PC-3 (cell line): ENCODE measurements at regions of chr3 and their contacts with region 1.

Region 1: DNA sequence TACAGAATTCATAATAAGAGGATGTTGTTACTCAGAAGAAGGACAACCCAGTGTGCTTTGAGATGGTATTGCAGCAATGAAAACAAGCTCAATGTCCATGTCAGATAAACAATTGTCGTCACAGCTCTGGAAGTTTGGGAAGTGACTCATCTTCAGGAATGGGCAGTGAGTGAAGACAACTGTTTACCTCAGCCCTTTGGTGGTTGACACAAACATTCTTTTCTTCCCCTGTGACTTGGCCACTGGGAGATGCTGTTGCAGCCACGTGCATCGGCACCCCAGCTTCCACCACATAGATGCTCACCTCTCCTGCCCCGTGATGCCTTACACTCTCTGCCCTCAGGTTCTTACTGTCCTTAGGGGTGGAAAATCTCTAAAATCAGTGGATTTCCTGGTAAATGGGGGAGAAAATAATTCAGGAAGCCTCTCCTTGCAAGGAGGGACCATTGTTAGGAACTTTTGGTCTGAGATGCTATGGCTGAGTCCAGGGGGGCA is 114.1 kb upstream of the GALNT15 start:
- DNase-seq: peak; percentile 99
- ATAC-seq: peak; percentile 88
- H3K4me3 ChIP-seq: no peak overlapping the region
- H3K27ac ChIP-seq: peak overlapping the region; percentile 84
- H3K4me1 ChIP-seq: peaks cover 43% of the 10 kb centered on the region
- H3K27me3 ChIP-seq: no peaks in the 10 kb centered on the region
- CTCF ChIP-seq: peak; percentile 66

Region 2: GRCh38 chr3:15998907-15999306 is 61.5 kb before region 1 on chr3:
- CTCF ChIA-PET with region 1: no interaction called
- POLR2A ChIA-PET with region 1: no interaction called
- intact Hi-C with region 1: no loop called
- DNase-seq: no peak
- ATAC-seq: no peak
- H3K4me3 ChIP-seq: no peak overlapping the region
- H3K27ac ChIP-seq: no peak overlapping the region
- H3K4me1 ChIP-seq: no peaks in the 10 kb centered on the region
- H3K27me3 ChIP-seq: no peaks in the 10 kb centered on the region
- CTCF ChIP-seq: no peak

Region 3: GRCh38 chr3:16090024-16090423 is 29.6 kb after region 1 on chr3:
- CTCF ChIA-PET with region 1: interaction called, 3 read pairs
- POLR2A ChIA-PET with region 1: no interaction called
- intact Hi-C with region 1: loop called (anchors 1 kb)
- DNase-seq: peak; percentile 98
- ATAC-seq: peak; percentile 96
- H3K4me3 ChIP-seq: no peak overlapping the region
- H3K27ac ChIP-seq: peak overlapping the region; percentile 52
- H3K4me1 ChIP-seq: peaks cover 30% of the 10 kb centered on the region
- H3K27me3 ChIP-seq: no peaks in the 10 kb centered on the region
- CTCF ChIP-seq: no peak

Region 4: DNA sequence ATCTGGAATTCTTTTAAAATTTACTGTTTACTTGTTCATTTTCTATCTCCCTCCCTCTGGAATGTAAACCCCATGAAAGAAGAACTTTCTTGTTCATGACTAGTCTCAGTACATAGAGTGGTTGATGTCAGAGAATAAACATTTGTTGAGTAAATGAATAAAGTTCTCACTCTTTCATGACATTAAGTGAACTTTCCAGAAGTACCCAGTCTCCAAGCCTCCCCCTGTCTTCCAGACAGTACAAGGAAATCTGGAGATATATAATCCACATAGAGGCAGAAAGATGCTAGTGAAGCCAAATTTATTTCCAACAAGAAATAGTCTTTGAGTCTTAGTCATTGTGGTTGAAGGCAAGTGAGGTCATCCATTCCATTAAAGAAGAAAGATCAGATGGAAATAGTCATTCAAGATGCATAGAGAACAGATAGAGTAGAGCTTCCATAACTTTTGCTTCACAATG is 42.5 kb after region 1 on chr3:
- CTCF ChIA-PET with region 1: no interaction called
- POLR2A ChIA-PET with region 1: no interaction called
- intact Hi-C with region 1: loop called (anchors 1 kb)
- DNase-seq: peak; percentile 68
- ATAC-seq: peak; percentile 63
- H3K4me3 ChIP-seq: no peak overlapping the region
- H3K27ac ChIP-seq: peak overlapping the region; percentile 97
- H3K4me1 ChIP-seq: peaks cover 22% of the 10 kb centered on the region
- H3K27me3 ChIP-seq: no peaks in the 10 kb centered on the region
- CTCF ChIP-seq: no peak; the same call in 1 of the 2 replicates

Region 5: DNA sequence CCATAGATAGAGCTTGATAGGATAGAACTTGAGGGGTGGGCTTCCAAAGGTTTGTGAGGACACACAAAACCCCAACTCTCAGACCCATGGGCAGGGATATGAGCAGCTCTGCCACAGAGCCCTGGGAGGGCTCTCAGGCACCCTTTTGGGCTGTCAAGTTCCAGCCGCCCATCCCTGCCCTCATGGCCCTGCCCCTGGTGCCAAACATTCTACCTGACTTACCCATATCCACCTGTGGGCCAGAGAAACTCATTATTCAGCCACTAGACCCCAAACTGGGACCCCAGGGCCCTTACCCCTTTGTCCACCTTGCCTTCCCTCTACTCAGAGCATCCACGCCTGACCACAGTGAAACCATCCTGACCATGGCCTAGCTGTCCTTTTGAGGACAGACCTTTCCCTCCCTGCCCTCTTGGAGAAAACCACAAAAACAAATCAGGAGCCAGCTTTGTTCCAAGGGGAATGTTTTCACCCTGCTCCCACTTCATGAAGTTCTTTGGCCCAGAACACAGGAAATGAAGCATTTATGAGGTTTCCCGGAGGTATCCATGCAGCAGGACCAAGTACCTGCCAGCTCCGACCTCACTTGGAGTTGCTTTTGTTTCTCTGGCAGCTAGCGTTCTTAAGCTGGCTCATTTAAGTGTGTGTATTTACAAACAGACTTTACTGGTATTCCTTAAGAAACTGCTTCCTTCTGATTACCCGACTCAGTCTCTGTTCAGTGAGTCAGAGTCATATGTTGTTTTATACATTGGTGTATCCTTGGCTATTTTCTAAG is 79.9 kb after region 1 on chr3:
- CTCF ChIA-PET with region 1: interaction called, 18 read pairs
- POLR2A ChIA-PET with region 1: no interaction called
- intact Hi-C with region 1: loop called (anchors 1 kb)
- DNase-seq: peak; percentile 78
- ATAC-seq: peak; percentile 88
- H3K4me3 ChIP-seq: no peak overlapping the region
- H3K27ac ChIP-seq: peak overlapping the region; percentile 58
- H3K4me1 ChIP-seq: peaks cover 15% of the 10 kb centered on the region
- H3K27me3 ChIP-seq: no peaks in the 10 kb centered on the region
- CTCF ChIP-seq: no peak

Region 6: DNA sequence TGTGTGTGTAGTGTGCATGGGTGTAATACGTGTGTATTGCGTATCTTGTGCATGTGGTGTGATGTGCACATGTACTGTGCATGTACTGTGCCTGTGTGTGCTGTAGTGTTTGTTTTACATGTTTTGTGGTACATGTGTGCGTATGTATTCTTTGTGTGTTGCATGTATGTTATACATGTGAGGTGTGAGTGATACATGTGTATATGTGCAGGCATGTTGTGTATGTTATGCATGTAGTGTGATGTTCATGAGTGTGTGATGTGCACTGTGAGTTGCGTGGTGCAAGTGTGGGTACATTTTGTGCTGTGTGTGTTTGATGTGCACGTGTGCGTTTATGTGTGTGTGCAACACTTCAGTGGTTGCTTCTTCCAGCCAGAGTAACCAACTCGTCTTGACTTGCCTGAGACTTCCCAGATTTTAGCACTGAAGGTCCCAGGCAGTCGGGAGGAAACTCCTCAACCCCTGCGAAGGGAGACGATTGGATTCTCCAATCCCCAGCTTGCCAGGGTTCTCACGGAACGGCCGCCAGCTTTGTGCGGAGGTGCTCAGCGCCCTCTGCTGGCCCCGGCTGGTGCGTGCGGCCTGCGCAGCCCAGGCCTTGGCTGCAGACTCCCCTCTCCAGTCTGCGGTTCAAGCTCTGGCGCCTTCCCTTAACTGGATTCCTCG is 117.7 kb after region 1 on chr3:
- CTCF ChIA-PET with region 1: interaction called, 4 read pairs
- POLR2A ChIA-PET with region 1: no interaction called
- intact Hi-C with region 1: loop called (anchors 5 kb)
- DNase-seq: peak; percentile 84
- ATAC-seq: peak; percentile 94
- H3K4me3 ChIP-seq: no peak overlapping the region
- H3K27ac ChIP-seq: no peak overlapping the region
- H3K4me1 ChIP-seq: peaks cover 12% of the 10 kb centered on the region; the same call in 1 of the 2 replicates
- H3K27me3 ChIP-seq: no peaks in the 10 kb centered on the region
- CTCF ChIP-seq: peak; percentile 96

Region 7: GRCh38 chr3:16227566-16227965 is 167.2 kb after region 1 on chr3:
- CTCF ChIA-PET with region 1: no interaction called
- POLR2A ChIA-PET with region 1: no interaction called
- intact Hi-C with region 1: no loop called
- DNase-seq: no peak
- ATAC-seq: no peak
- H3K4me3 ChIP-seq: no peak overlapping the region
- H3K27ac ChIP-seq: no peak overlapping the region
- H3K4me1 ChIP-seq: no peaks in the 10 kb centered on the region
- H3K27me3 ChIP-seq: no peaks in the 10 kb centered on the region
- CTCF ChIP-seq: no peak

Region 8: GRCh38 chr3:16311960-16312451 is 251.6 kb after region 1 on chr3:
- CTCF ChIA-PET with region 1: no interaction called
- POLR2A ChIA-PET with region 1: no interaction called
- intact Hi-C with region 1: no loop called
- DNase-seq: no peak
- ATAC-seq: no peak
- H3K4me3 ChIP-seq: no peak overlapping the region
- H3K27ac ChIP-seq: no peak overlapping the region
- H3K4me1 ChIP-seq: peaks cover 8% of the 10 kb centered on the region
- H3K27me3 ChIP-seq: no peaks in the 10 kb centered on the region
- CTCF ChIP-seq: no peak